ENCODE measurements at regions of chr21 and their contacts with region 1.

Region 1: DNA sequence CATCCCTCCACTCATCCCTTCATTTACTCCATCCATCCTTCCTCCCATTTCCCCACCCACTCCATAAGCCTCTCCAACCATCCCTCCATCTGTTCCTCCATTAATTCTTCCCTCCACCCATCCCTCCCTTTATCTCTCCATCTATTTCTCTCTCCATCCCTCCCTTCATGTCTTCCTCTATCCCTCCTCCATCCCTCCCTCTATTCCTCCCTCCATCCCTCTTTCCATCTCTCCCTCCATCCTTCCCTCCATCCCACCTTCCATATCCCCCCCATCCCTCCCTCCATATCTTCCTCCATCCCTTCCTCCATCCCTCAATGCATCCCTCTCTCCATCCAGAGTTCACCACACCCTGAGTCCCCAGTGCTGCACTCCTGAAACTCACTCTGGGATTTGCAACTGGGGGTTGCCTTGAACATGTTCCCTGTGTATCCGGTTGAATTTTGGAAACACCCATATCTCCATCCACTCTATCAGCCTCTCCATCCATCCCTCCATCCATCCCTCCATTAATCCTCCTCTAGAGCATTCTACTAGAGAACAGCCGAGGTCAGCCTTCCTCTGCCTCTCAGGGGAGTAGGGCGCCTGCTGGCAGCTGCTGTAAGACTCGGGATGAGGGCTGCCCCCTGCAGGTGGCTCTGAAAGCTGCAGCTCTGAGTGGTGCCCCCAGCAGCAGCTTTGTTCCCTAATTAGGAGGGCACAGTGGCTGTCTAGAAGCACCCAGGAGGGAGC is 39.4 kb downstream of the ABCG1 start:
- DNase-seq: peak; percentile 89
- ATAC-seq: peak; percentile 99
- H3K4me3 Mint-ChIP-seq: no peak overlapping the region
- H3K27ac Mint-ChIP-seq: no peak overlapping the region
- H3K4me1 Mint-ChIP-seq: peaks cover 17% of the 10 kb centered on the region
- H3K27me3 Mint-ChIP-seq: no peaks in the 10 kb centered on the region
- CTCF ChIP-seq: peak; percentile 89

Region 2: GRCh38 chr21:42117229-42117966 is 140.9 kb before region 1 on chr21:
- CTCF ChIA-PET with region 1: interaction called, 13 read pairs
- POLR2A ChIA-PET with region 1: no interaction called
- intact Hi-C with region 1: no loop called
- DNase-seq: peak; percentile 86
- ATAC-seq: peak; percentile 91
- H3K4me3 Mint-ChIP-seq: peak overlapping the region; percentile 40
- H3K27ac Mint-ChIP-seq: peak overlapping the region; percentile 30
- H3K4me1 Mint-ChIP-seq: peaks cover 25% of the 10 kb centered on the region
- H3K27me3 Mint-ChIP-seq: peaks cover 53% of the 10 kb centered on the region
- CTCF ChIP-seq: peak; percentile 97

Region 3: DNA sequence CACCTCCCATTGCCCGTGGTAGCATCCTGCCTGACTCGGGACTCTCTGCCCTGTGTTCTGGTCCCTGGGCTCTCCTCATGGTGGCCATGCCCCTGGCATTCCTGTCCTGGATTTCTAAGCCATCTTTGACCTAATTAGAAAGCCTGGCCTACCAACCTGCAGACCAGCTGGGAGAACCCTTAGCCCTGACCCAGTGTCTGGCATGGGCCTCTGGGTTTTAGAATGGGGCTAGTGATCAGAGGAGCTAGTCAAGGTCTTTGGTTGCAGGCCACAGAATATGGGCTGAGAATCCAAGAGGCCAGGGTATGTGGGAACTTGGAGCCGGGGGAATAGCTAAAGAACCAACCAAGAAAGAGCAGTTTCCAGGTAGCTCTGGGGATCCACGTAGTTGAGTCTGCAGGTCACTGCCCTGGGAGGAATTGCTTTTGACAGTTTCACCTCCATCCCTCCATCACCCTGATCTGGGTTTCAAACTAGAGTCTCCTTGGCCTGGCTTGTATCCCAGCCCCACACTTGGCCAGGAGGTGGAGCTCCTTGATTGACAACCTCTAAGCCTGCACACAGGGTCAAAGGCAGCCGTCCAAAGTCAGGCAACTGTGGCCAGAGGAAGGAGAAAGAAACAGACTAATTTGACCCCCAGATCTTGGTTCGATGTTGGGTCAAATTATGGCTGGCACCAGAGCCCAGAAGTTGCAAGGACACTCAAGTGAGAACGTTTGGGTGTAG is 94.1 kb before region 1 on chr21:
- CTCF ChIA-PET with region 1: interaction called, 84 read pairs
- POLR2A ChIA-PET with region 1: no interaction called
- intact Hi-C with region 1: loop called (anchors 2 kb)
- DNase-seq: peak; percentile 78
- ATAC-seq: peak; percentile 66
- H3K4me3 Mint-ChIP-seq: no peak overlapping the region
- H3K27ac Mint-ChIP-seq: no peak overlapping the region
- H3K4me1 Mint-ChIP-seq: peaks cover 32% of the 10 kb centered on the region
- H3K27me3 Mint-ChIP-seq: no peaks in the 10 kb centered on the region
- CTCF ChIP-seq: peak; percentile 62

Region 4: GRCh38 chr21:42193131-42193671 is 65.1 kb before region 1 on chr21:
- CTCF ChIA-PET with region 1: interaction called, 12 read pairs
- POLR2A ChIA-PET with region 1: no interaction called
- intact Hi-C with region 1: no loop called
- DNase-seq: peak; percentile 88
- ATAC-seq: peak; percentile 50
- H3K4me3 Mint-ChIP-seq: no peak overlapping the region
- H3K27ac Mint-ChIP-seq: peak overlapping the region; percentile 75
- H3K4me1 Mint-ChIP-seq: peaks cover 57% of the 10 kb centered on the region
- H3K27me3 Mint-ChIP-seq: no peaks in the 10 kb centered on the region
- CTCF ChIP-seq: no peak

Region 5: DNA sequence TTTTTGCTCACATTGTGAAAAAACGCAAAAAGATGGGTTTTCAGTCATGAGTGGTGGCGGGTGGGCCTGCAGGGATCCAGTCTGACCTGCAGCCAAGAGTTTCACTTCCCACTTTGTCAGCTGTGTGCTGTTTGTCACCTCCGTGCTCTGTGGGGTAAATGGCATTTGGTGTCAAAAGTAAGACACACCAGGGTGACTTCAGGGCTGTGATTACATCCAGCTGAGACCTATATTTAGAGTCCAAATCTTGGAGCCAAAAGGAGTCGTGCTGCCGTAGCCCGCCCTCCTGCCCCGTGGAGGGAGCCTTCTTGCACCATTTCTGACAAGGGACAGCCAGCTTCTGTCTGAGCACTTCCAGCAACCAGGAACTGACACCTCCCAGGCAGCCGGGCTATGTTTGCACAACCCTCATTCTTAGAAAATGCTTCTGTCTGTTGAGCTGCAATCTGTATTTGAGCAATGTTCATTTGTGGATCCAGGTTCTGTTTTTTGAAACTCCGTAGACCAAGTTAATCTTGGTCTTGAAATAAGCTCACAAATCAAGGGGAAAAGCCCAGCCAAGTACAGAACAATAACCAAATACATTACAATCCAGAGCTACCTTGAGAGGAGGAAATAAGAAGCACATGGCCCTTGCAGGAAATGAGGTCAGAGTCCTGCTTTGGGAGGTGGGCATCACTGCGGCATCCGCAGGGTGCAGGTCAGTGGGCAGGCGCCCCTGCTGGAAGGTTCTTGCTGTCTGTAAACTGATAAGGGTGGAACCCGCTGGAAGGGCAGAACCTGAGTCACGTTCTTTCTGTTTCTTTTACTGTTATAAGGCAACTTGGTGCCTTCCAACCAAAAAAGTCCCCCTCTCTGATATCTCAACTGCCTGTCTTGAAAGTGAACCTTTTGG is 25.0 kb before region 1 on chr21:
- CTCF ChIA-PET with region 1: interaction called, 38 read pairs
- POLR2A ChIA-PET with region 1: interaction called, 15 read pairs
- intact Hi-C with region 1: no loop called
- DNase-seq: peak; percentile 95
- ATAC-seq: peak; percentile 70
- H3K4me3 Mint-ChIP-seq: peak overlapping the region; percentile 73
- H3K27ac Mint-ChIP-seq: peak overlapping the region; percentile 97
- H3K4me1 Mint-ChIP-seq: peaks cover 96% of the 10 kb centered on the region
- H3K27me3 Mint-ChIP-seq: no peaks in the 10 kb centered on the region
- CTCF ChIP-seq: peak; percentile 68

Region 6: GRCh38 chr21:42309753-42310221 is 51.5 kb after region 1 on chr21:
- CTCF ChIA-PET with region 1: interaction called, 15 read pairs
- POLR2A ChIA-PET with region 1: no interaction called
- intact Hi-C with region 1: no loop called
- DNase-seq: peak; percentile 86
- ATAC-seq: peak; percentile 93
- H3K4me3 Mint-ChIP-seq: no peak overlapping the region
- H3K27ac Mint-ChIP-seq: no peak overlapping the region
- H3K4me1 Mint-ChIP-seq: peaks cover 2% of the 10 kb centered on the region
- H3K27me3 Mint-ChIP-seq: no peaks in the 10 kb centered on the region
- CTCF ChIP-seq: peak; percentile 90

Region 7: GRCh38 chr21:42878993-42879787 is 620.9 kb after region 1 on chr21 and contains the start of gene WDR4:
- CTCF ChIA-PET with region 1: no interaction called
- POLR2A ChIA-PET with region 1: no interaction called
- intact Hi-C with region 1: no loop called
- DNase-seq: peak; percentile 99
- ATAC-seq: peak; percentile 92
- H3K4me3 Mint-ChIP-seq: peak within 1 kb of the TSS; percentile 94
- H3K27ac Mint-ChIP-seq: peak within 1 kb of the TSS; percentile 99
- H3K4me1 Mint-ChIP-seq: peaks cover 27% of the 10 kb centered on the region
- H3K27me3 Mint-ChIP-seq: no peaks in the 10 kb centered on the region
- CTCF ChIP-seq: no peak
- total RNA-seq, gene WDR4: 49.8 to 53.5 TPM